ENCODE measurements at regions of chr5 and their contacts with region 1.

Region 1: DNA sequence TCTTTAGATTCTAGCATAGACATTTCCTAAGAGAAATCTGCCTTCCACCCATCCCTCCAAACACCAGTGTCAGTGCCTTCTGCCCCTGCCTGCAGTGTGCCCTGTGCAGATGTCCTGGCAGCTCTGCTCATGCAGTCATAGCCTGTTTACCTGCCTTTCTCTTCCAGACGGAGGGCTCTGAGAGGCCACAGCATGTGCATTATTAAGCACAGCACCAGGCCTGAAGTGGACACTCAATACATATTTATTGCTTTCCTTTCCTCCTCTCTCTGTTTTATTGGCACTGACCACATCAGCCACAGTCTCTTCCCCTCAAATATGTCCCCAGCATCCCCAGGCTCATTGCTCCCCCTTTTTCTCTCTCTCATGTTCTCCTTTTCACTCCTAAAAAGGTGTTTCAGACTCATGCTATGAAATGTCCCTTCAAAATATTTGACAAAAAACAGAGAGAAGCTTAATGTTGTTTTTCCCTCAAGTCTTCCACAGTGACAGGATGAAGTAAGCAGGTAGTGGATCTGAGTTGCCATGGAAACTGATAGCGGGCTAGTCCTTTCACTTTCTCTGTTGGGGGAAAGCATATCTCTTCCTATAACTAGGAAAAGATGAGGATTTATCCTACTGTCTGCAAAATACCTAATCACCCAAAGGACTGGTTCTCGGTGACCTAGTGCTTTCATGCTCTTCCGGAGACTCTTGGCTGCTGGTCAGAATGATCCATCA is 100.9 kb downstream of the ATP10B start:
- DNase-seq: no peak
- H3K4me3 ChIP-seq: no peak overlapping the region
- CTCF ChIP-seq: no peak
- POLR2A ChIP-seq: no peak

Region 2: GRCh38 chr5:162641142-162641813 is 1890.2 kb after region 1 on chr5:
- intact Hi-C with region 1: loop called (anchors 5 kb)
- DNase-seq: no peak
- H3K4me3 ChIP-seq: no peak overlapping the region
- CTCF ChIP-seq: no peak
- POLR2A ChIP-seq: no peak

Measured in lower leg skin (tissue), 4 donors.